ENCODE measurements at regions of chr6 and their contacts with region 1.

Region 1: GRCh38 chr6:106444777-106445507 is 84.4 kb downstream of the CRYBG1 start:
- DNase-seq: peak; percentile 63 to 66
- ATAC-seq: peak; percentile 78 to 86
- H3K4me3 ChIP-seq: no peak overlapping the region
- H3K27ac ChIP-seq: no peak overlapping the region
- H3K4me1 ChIP-seq: peaks cover 16% of the 10 kb centered on the region
- CTCF ChIP-seq: peak; percentile 68
- EP300 ChIP-seq: no peak
- POLR2A ChIP-seq: no peak
- RAD21 ChIP-seq: peak; percentile 73

Region 2: GRCh38 chr6:106339334-106340029 is 105.5 kb before region 1 on chr6:
- CTCF ChIA-PET with region 1: interaction called, 30 read pairs
- POLR2A ChIA-PET with region 1: no interaction called
- DNase-seq: peak; percentile 56 to 86
- ATAC-seq: peak; percentile 99
- H3K4me3 ChIP-seq: peak overlapping the region; percentile 28; the same call in 2 of the 3 replicates
- H3K27ac ChIP-seq: peak overlapping the region in 1 of 2 experiments; percentile 30; a peak in 2 of 6 replicates
- H3K4me1 ChIP-seq: no peaks in the 10 kb centered on the region
- CTCF ChIP-seq: peak; percentile 71
- EP300 ChIP-seq: no peak
- POLR2A ChIP-seq: no peak
- RAD21 ChIP-seq: peak; percentile 64

Region 3: DNA sequence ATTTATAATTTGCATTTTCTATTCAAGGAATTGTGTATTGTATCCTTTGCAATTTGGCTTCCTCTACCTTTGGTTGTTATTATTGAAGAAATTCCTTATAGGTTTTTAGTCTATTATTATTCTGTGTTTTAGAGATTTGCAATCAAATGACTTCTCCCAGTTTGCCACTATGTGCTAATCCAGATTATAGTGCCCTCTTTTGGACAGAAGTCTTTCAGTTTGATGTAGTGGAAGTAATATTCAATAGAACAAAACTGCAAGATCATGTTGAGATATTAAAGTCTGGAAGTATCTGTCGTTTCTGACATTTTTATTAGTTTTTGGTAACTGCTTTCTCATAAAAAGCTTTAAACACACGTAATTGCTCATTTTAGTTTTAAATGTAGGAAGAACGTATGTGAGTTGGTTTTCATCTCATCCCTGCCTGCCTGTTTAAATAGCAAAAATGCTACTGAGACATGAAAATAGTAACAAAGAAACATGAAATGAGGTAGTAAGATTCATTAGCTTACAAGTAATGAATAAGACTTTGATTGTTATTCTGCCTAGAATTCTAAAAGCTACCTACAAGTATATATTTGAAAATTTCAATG is 111.5 kb after region 1 on chr6:
- CTCF ChIA-PET with region 1: interaction called, 195 read pairs
- POLR2A ChIA-PET with region 1: no interaction called
- DNase-seq: peak in 1 of 2 experiments; percentile 26
- ATAC-seq: peak in 1 of 2 experiments; percentile 30; a peak in 1 of 6 replicates
- H3K4me3 ChIP-seq: no peak overlapping the region
- H3K27ac ChIP-seq: no peak overlapping the region
- H3K4me1 ChIP-seq: peaks cover 29% of the 10 kb centered on the region
- CTCF ChIP-seq: peak; percentile 49
- EP300 ChIP-seq: no peak
- POLR2A ChIP-seq: no peak
- RAD21 ChIP-seq: peak; percentile 61 to 62

Region 4: GRCh38 chr6:106568530-106568929 is 123.6 kb after region 1 on chr6:
- CTCF ChIA-PET with region 1: interaction called, 195 read pairs
- POLR2A ChIA-PET with region 1: no interaction called
- DNase-seq: no peak
- ATAC-seq: no peak
- H3K4me3 ChIP-seq: no peak overlapping the region
- H3K27ac ChIP-seq: peak overlapping the region in 1 of 2 experiments; percentile 57; a peak in 2 of 6 replicates
- H3K4me1 ChIP-seq: peaks cover 10% of the 10 kb centered on the region
- CTCF ChIP-seq: no peak
- EP300 ChIP-seq: no peak
- POLR2A ChIP-seq: no peak
- RAD21 ChIP-seq: no peak